ENCODE measurements at regions of chr16 and their contacts with region 1.

Region 1: GRCh38 chr16:30571695-30572600 is at the start of gene ZNF688:
- DNase-seq: peak; percentile 93
- H3K4me3 Mint-ChIP-seq: peak within 1 kb of the TSS; percentile 93
- H3K27ac Mint-ChIP-seq: peak within 1 kb of the TSS; percentile 90
- H3K4me1 Mint-ChIP-seq: peaks cover 56% of the 10 kb centered on the region
- H3K27me3 Mint-ChIP-seq: no peaks in the 10 kb centered on the region
- total RNA-seq, gene ZNF688: 7.4 and 9.4 TPM in 2 replicates

Region 2: DNA sequence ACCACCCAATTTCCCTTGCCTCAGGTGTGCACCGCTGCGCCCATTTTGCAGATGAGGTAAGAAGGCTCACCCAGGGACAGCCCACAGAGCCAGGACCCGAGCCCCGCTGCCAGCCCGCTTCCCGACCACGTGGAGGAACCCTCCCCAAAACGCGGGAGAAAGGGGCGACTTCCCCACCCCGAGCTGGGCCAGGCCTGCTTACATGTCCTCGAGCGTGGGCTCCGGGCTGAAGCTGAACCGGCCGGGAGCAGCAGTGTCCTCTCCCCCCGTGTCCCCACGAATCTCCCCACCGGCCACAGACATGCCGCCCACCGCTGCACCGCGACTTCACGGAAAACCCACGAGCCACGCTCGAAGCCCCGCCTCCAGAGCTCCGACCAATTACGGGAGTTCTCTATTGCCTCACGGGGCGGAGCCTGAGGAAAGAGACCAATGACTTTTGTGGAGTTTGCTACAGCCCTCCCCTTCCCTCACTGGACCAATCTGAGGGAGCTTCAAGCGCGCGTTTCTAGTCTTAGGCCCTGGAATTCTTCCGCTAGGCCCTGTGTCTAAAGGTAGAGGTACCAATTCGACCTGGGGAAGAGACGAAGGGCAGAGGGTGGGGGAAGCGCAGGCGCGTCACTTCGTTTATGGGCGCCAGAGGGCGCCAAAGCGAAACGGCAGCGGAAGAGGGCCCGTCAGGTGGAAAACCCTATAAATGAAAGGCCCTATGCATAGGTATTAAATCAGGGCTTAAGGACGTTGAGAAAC is 142.1 kb before region 1 on chr16 and contains the start of gene DCTPP1:
- intact Hi-C with region 1: loop called (anchors 1 kb)
- DNase-seq: peak; percentile 96
- H3K4me3 Mint-ChIP-seq: no peak within 1 kb of the TSS
- H3K27ac Mint-ChIP-seq: no peak within 1 kb of the TSS
- H3K4me1 Mint-ChIP-seq: peaks cover 31% of the 10 kb centered on the region
- H3K27me3 Mint-ChIP-seq: no peaks in the 10 kb centered on the region
- total RNA-seq, gene DCTPP1: 173 and 178 TPM in 2 replicates

Region 3: DNA sequence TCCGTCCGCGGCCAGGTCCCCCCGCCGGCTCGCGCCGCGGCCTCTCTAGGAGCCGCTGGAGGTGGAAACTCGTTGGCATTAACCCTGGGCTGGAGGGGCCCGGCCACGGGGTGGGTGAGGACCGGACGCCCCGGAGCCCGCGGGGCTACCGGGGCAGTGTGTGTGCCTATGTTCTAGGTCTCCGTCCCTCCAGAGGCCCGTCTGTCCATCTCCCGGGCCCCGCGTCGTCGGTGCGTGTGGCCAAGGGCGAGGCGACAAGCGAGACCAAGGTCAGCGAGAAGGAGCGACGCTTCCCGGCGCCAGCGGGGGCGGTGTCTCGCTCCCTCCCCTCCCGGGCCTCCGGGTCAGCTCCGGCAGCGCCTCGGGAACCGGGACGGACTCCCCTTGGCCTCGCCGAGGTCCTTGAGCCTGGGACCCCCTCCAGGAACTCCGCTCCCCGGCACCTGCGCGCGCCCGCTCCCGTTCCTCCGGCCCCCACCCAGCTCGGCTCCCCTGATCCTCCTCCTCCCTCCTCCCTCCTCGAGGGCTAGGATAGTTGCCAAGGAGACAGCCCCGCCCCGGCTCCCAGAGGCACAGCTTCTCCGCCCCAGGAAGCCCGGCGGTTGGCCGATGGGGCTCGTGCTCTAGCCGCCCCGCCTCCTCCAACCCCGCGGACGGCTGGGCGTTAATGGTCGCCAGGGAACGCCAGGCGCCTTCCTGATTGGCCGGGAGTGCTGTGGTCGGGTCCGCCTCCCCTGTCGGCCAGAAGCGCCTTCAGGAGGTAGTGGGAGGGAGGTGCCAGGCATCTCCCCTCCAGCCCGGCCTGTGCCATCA is 44.9 kb before region 1 on chr16:
- intact Hi-C with region 1: loop called (anchors 1 kb)
- DNase-seq: peak; percentile 93
- H3K4me3 Mint-ChIP-seq: peak overlapping the region; percentile 84
- H3K27ac Mint-ChIP-seq: peak overlapping the region; percentile 54
- H3K4me1 Mint-ChIP-seq: peaks cover 46% of the 10 kb centered on the region
- H3K27me3 Mint-ChIP-seq: no peaks in the 10 kb centered on the region

Region 4: GRCh38 chr16:30551781-30552180 is 20.2 kb before region 1 on chr16:
- intact Hi-C with region 1: loop called (anchors 1 kb)
- DNase-seq: peak; percentile 66
- H3K4me3 Mint-ChIP-seq: peak overlapping the region; percentile 59
- H3K27ac Mint-ChIP-seq: peak overlapping the region; percentile 93
- H3K4me1 Mint-ChIP-seq: peaks cover 56% of the 10 kb centered on the region
- H3K27me3 Mint-ChIP-seq: no peaks in the 10 kb centered on the region

Region 5: GRCh38 chr16:30585400-30586189 is 13.6 kb after region 1 on chr16 and contains the start of gene ZNF785:
- intact Hi-C with region 1: loop called (anchors 1 kb)
- DNase-seq: peak; percentile 93
- H3K4me3 Mint-ChIP-seq: peak within 1 kb of the TSS; percentile 89
- H3K27ac Mint-ChIP-seq: peak within 1 kb of the TSS; percentile 87
- H3K4me1 Mint-ChIP-seq: peaks cover 18% of the 10 kb centered on the region
- H3K27me3 Mint-ChIP-seq: no peaks in the 10 kb centered on the region
- total RNA-seq, gene ZNF785: 19.2 and 21.5 TPM in 2 replicates

Region 6: DNA sequence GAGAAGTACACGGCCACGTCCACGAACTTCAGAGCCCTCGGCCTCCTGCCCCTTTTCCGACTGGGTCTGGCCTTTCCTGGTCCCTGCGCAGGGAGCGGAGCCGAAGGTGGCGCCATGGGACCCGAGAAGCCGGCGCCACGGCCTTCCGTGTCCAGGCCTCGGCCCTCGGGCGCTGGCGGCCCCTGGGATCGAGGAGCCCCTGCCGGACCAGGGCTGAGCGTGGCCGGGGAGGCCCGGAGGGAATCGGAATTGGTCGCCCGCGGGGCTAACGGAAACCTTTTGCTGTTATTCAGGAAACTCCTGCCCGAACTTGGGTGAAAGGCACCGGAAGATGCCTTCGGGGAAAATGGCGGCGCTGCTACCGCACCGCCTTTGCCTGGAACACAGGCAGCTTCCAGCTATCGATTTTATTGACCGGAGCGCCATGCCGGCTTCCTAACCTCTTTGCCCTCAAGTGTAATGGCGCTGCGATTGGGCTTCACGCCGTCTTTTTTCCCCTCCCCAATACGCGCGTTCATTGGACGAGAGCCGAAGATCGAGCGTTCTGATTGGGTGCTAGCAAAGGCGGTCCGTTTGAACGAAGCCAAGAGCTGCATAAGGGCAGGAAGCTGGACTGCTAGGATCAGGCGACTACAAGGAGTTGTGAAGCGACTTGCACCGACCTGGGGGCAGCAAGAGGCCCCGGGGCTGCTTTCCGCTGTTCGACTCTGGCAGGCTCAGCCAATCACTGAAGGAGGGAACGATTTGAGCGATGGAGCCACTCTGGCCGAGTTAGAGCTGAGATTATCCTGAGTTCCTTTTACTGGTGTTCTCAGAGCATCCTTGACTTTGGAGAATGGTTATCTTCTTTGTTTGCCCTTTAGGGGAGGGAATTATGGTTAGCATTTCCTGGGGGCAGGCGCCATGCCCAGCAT is 38.2 kb after region 1 on chr16 and contains the start of gene ZNF689:
- intact Hi-C with region 1: loop called (anchors 1 kb)
- DNase-seq: peak; percentile 95
- H3K4me3 Mint-ChIP-seq: peak within 1 kb of the TSS; percentile 93
- H3K27ac Mint-ChIP-seq: peak within 1 kb of the TSS; percentile 96
- H3K4me1 Mint-ChIP-seq: peaks cover 19% of the 10 kb centered on the region
- H3K27me3 Mint-ChIP-seq: no peaks in the 10 kb centered on the region
- total RNA-seq, gene ZNF689: 14.7 TPM in 2 replicates

Region 7: DNA sequence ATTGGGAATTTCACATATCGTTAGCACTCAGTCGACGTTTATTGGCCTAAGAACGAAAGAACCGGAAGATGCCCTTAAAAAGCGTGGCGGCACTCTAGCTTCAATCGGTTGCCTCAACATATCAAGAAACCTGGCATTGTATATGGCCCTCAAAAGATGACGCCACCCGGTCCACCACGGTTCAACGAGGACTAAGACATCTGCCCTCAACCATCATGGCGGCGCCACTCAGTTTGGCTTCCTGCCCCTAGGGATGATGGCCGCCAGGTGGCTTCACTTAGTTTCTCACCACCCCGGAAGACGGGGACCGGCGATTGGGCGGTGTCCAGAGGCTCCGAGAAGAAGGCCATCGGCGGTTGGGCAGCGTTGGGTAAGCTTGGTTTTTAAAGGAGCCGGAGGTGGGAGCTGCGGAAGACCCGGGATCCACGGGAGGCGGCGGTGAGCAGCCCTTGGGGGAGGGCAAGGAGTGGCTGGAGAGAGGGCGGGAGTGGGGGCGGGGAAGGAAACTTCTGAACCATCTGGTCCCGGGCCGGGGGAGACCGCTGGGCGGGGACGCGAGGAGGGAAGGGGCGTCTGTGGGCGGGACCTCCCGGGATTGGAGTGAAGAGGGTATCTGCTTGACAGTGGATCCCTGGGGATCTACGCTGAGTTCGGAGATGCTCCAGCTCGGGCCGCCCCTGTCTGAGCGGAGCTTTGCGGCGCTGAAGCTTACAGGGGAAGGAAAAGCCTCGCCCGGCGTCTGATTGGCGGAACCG is 78.6 kb after region 1 on chr16 and contains the start of gene PRR14:
- intact Hi-C with region 1: loop called (anchors 1 kb)
- DNase-seq: peak; percentile 98
- H3K4me3 Mint-ChIP-seq: peak within 1 kb of the TSS; percentile 97
- H3K27ac Mint-ChIP-seq: peak within 1 kb of the TSS; percentile 98
- H3K4me1 Mint-ChIP-seq: peaks cover 25% of the 10 kb centered on the region
- H3K27me3 Mint-ChIP-seq: peaks cover 2% of the 10 kb centered on the region
- total RNA-seq, gene PRR14: 91.9 and 97.4 TPM in 2 replicates

Region 8: DNA sequence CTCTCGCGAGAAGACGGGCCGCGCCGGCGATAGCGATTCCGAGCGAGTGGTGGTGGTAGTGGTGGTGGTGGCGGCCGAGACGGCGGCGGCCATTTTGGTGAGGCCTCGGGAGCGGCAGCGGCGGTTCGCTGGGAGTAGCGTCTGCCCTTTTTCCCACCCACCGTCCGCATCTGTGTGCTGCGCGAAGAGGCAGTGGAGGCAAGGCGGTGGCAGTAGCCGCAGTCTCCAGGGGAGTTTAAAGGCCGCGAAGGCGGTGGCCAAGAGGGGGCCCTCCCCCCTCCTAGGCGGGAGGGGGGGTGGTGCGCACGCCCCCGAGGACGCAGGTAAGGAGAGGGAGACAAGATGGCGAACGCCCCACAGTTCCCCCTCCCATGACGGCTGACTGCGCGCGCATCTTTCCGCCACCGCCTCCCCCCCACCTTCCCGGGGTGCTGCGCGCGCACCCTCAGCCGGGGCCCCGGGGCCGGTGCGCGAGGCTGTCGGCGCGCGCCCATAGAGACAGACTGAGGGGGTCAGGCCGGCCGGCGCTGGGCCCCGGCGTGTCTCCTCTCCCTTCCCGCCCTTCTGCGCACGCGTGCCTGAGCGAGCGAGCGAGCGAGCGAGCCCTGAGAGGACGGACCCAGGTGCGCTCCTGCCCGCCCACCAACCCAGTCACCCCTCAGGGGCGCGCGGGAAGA is 126.3 kb after region 1 on chr16:
- intact Hi-C with region 1: no loop called
- DNase-seq: peak; percentile 99
- H3K4me3 Mint-ChIP-seq: peak overlapping the region; percentile 99
- H3K27ac Mint-ChIP-seq: peak overlapping the region; percentile 99
- H3K4me1 Mint-ChIP-seq: peaks cover 42% of the 10 kb centered on the region
- H3K27me3 Mint-ChIP-seq: peaks cover 2% of the 10 kb centered on the region